ENCODE measurements at regions of chr14 and their contacts with region 1.

Region 1: GRCh38 chr14:35416108-35416750 is 11.7 kb upstream of the NFKBIA start:
- DNase-seq: peak; percentile 88
- ATAC-seq: peak; percentile 67
- H3K4me3 Mint-ChIP-seq: peak overlapping the region; percentile 72
- H3K27ac Mint-ChIP-seq: peak overlapping the region; percentile 98
- H3K4me1 Mint-ChIP-seq: peaks cover 55% of the 10 kb centered on the region
- H3K27me3 Mint-ChIP-seq: no peaks in the 10 kb centered on the region
- CTCF ChIP-seq: no peak

Region 2: DNA sequence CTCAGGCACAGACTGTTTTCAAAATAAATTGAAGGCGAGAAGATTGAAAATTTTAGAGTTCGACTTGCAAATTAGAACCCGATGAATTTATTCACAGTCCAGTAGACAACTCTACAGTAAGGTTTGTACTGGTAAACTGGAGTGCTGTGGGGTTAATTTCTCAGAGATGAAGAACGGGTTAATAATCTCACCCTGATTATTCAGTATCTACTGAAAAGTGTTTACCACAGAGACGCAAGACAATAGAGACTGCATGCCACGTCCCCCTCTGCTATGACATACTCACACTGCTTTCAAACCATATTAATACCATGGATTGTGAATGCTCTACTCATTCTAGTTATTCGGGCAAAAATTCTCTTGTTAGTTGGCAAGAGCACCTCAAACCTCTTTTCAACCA is 737.9 kb before region 1 on chr14:
- CTCF ChIA-PET with region 1: interaction called, 3 read pairs
- POLR2A ChIA-PET with region 1: no interaction called
- intact Hi-C with region 1: loop called (anchors 10 kb)
- DNase-seq: no peak
- ATAC-seq: no peak
- H3K4me3 Mint-ChIP-seq: no peak overlapping the region
- H3K27ac Mint-ChIP-seq: no peak overlapping the region
- H3K4me1 Mint-ChIP-seq: peaks cover 6% of the 10 kb centered on the region
- H3K27me3 Mint-ChIP-seq: no peaks in the 10 kb centered on the region
- CTCF ChIP-seq: no peak

Region 3: GRCh38 chr14:35046048-35046741 is 370.0 kb before region 1 on chr14 and contains the start of gene FAM177A1:
- CTCF ChIA-PET with region 1: interaction called, 3 read pairs
- POLR2A ChIA-PET with region 1: interaction called, 3 read pairs
- intact Hi-C with region 1: loop called (anchors 10 kb)
- DNase-seq: peak; percentile 100
- ATAC-seq: peak; percentile 95
- H3K4me3 Mint-ChIP-seq: peak within 1 kb of the TSS; percentile 83
- H3K27ac Mint-ChIP-seq: peak within 1 kb of the TSS; percentile 97
- H3K4me1 Mint-ChIP-seq: peaks cover 25% of the 10 kb centered on the region
- H3K27me3 Mint-ChIP-seq: no peaks in the 10 kb centered on the region
- CTCF ChIP-seq: no peak
- total RNA-seq, gene FAM177A1: 28.0 to 35.8 TPM

Region 4: GRCh38 chr14:35140718-35141581 is 275.3 kb before region 1 on chr14:
- CTCF ChIA-PET with region 1: interaction called, 219 read pairs
- POLR2A ChIA-PET with region 1: interaction called, 4 read pairs
- intact Hi-C with region 1: loop called (anchors 5 kb)
- DNase-seq: no peak
- ATAC-seq: peak; percentile 37
- H3K4me3 Mint-ChIP-seq: no peak overlapping the region
- H3K27ac Mint-ChIP-seq: no peak overlapping the region
- H3K4me1 Mint-ChIP-seq: peaks cover 13% of the 10 kb centered on the region
- H3K27me3 Mint-ChIP-seq: no peaks in the 10 kb centered on the region
- CTCF ChIP-seq: peak; percentile 61

Region 5: GRCh38 chr14:35229495-35230089 is 186.6 kb before region 1 on chr14:
- CTCF ChIA-PET with region 1: interaction called, 182 read pairs
- POLR2A ChIA-PET with region 1: interaction called, 3 read pairs
- intact Hi-C with region 1: loop called (anchors 2 kb)
- DNase-seq: no peak
- ATAC-seq: peak; percentile 74
- H3K4me3 Mint-ChIP-seq: no peak overlapping the region
- H3K27ac Mint-ChIP-seq: no peak overlapping the region
- H3K4me1 Mint-ChIP-seq: peaks cover 16% of the 10 kb centered on the region
- H3K27me3 Mint-ChIP-seq: no peaks in the 10 kb centered on the region
- CTCF ChIP-seq: peak; percentile 65

Region 6: DNA sequence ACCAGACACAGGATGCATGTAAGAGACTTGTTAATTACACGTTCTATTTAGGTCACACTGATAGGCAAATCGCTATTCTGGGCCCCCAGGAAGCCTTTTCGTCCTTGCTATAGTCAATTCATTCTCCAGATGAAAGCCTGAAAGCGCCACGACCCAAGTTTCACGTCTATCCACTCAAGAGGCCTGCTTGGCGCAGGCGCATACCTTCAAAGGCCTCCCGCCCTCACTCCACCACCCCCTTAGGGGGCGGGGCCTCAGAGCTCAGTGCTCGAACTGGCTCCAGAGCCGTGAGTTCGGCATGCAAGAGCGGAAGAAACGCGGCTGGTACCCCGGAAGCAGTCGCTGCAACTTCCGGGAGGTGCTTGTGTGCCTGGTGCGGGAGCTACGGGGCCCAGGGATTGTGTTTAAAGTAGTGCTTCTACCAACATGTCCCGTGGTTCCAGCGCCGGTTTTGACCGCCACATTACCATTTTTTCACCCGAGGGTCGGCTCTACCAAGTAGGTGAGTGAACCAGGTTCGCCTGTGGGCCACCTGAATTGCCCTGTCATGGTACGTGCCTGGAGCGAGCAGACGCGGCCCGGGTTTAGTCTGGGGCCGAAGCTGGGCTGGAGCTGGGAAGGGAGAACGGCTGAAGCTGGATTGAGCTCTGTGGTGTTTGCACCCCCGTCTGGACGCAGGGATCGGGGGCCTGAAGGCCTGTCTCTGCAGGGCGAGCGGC is 124.0 kb before region 1 on chr14 and contains the start of gene PSMA6:
- CTCF ChIA-PET with region 1: interaction called, 14 read pairs
- POLR2A ChIA-PET with region 1: interaction called, 18 read pairs
- intact Hi-C with region 1: loop called (anchors 5 kb)
- DNase-seq: peak; percentile 99
- ATAC-seq: peak; percentile 92
- H3K4me3 Mint-ChIP-seq: peak within 1 kb of the TSS; percentile 97
- H3K27ac Mint-ChIP-seq: peak within 1 kb of the TSS; percentile 98
- H3K4me1 Mint-ChIP-seq: peaks cover 50% of the 10 kb centered on the region
- H3K27me3 Mint-ChIP-seq: no peaks in the 10 kb centered on the region
- CTCF ChIP-seq: no peak
- total RNA-seq, gene PSMA6: 361 to 393 TPM

Region 7: GRCh38 chr14:35365130-35366055 is 50.8 kb before region 1 on chr14:
- CTCF ChIA-PET with region 1: interaction called, 8 read pairs
- POLR2A ChIA-PET with region 1: interaction called, 11 read pairs
- intact Hi-C with region 1: no loop called
- DNase-seq: peak; percentile 95
- ATAC-seq: peak; percentile 89
- H3K4me3 Mint-ChIP-seq: peak overlapping the region; percentile 49
- H3K27ac Mint-ChIP-seq: peak overlapping the region; percentile 94
- H3K4me1 Mint-ChIP-seq: peaks cover 68% of the 10 kb centered on the region
- H3K27me3 Mint-ChIP-seq: no peaks in the 10 kb centered on the region
- CTCF ChIP-seq: no peak

Measured in activated CD8-positive, alpha-beta T cell treated with anti-CD3 and anti-CD28 coated beads for 36 hours (primary cell).